ENCODE measurements at regions of chr22 and their contacts with region 1.

Region 1: DNA sequence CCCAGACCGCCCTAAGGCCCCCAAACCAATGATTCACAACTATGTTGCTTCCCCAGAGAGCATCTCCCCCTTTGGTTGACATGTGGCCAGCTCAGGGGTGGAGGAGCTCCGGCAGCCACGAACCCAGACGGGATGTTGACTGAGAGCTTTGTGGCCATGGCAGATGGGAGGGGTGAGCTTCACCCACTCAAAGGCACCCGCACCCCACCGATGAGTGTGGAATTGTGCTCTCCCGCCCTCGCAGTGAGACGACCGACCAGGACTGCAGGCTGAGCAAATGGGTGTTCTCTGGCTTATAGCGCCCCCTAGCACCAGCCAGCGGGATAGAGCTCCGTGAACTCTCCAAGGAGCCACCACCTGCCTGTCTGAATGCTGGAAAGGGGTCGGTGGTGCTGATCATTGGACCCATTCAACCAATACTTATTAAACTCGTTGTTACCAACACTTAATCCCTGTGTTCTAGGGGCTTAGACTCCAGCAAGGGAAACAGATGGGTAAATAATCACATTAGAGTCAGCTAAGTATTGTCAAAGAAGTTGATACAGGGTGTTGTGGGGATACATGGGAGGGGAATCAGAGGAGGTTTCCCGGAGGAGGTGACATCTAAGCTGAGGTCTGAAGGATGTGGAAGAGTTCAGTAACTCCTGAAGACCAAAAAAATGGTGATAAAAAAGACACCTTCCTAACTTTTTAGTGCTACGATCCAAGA is 4.5 kb upstream of the TIMP3 start:
- DNase-seq: peak; percentile 80
- CTCF ChIP-seq: peak; percentile 83

Region 2: DNA sequence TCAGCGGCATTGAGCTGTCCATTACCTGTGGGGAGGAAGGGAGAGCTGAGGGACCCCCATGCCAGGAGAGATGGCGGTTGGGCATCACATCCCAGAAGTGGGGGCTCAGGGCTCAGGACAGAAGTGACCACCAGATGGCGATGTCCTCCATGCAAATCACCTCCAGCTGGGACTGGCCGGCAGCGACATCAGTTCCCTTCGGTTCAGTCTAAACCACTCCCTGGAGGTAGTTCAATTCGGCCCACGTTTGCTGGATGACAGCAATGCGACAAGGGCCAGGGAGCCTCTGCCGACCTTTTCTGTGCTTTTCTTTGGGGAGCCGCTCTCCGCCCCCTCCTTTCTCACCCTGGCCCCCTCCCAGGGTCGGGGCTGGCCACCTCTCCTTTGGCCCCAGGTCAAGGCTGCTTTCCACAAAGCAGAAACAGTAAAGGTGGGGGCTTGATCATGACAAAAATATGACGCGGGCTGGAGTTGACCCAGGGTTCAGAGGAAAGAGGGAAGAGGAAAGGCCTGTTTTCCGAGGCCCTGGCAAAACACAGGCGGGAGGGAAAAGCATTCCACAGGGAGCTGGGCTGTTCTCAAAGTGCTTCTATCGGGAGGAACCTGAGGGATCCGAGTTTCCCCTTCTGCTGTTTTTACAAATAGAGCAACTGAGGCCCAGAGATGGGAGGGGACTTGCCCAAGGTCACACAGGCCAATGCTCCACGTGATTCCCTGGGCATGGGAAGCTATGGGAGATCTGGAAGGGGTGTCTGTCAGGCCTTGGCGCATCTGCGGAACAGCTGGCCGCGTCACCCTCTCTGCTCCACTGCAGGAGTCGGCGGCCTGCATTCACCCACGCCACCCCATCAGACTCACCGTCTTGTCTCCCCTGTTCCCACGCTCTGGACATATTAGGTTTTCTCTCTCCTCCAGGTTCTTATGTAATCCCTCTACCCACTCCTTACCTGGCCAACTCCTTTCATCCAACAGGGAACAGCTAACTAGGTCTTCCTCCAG is 267.7 kb before region 1 on chr22:
- in situ Hi-C with region 1: loop called (anchors 10 kb)
- DNase-seq: peak; percentile 89
- CTCF ChIP-seq: peak; percentile 79

Region 3: DNA sequence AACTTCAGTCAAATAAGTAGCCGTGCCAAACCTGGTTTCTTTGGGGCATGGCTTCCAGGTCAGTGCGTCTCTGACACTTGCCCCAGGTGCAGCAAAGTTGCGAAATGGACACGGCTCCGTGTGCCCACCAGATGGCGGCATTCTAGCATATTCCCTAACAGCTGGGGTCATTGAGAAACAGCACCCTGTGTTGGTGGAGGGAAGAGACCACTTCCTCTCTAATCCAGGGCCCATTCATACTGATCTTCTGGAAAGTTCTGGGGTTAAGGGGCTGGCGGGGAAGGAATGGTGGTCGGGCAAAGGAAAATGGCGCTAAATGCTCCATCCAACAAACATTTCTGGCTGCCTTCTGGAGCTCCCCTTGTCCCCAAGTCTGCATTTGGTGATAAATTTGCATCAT is 136.7 kb before region 1 on chr22:
- in situ Hi-C with region 1: loop called (anchors 25 kb)
- DNase-seq: peak; percentile 72
- CTCF ChIP-seq: peak; percentile 75

Region 4: DNA sequence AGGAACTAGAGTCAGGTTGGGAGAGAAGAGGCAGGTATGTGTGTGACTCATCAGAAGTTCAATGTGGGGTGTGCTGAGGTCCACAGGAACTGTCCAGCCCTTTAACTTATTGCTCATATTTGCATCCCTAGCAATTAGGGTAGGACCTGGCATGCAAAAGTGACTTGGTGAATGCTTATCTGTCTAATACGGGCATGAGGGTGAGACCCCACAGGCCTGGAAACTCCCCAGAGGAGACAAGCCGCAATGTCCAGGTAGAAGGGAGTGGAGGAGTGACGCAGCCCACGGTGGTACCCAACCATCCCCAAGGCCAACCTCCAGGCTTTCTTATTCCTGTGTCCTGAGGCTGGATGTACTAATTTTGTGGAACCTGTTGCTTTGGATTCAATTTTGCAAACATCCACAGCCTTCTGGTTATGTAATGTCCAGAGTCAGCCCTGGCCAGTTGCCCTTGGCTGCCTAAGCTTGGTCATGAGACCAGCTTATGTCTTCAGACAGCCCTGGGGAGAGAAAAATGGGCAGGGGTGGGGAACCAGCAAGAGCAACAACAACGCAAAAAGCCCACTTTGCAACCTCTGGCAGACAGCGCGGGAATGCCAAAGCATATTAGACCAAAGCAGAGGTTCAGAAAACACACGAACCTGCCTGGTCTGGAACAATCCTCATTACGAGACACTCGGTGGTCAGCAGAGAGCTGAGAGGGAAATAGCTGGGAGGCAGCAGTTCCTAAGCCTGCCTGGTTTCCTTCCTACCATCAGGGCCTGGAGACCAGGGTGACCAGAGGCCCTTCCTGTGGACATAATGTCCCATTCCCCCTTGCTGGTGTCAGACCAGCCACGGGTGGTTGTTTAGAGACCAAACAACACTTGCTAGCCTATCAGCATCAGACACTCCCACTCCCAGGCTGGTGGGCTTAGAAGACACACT is 53.8 kb after region 1 on chr22:
- in situ Hi-C with region 1: no loop called
- DNase-seq: no peak
- CTCF ChIP-seq: no peak